Naive thymus-derived CD4-positive, alpha-beta T cell (primary cell): ENCODE measurements at regions of chr2 and their contacts with region 1.

Region 1: DNA sequence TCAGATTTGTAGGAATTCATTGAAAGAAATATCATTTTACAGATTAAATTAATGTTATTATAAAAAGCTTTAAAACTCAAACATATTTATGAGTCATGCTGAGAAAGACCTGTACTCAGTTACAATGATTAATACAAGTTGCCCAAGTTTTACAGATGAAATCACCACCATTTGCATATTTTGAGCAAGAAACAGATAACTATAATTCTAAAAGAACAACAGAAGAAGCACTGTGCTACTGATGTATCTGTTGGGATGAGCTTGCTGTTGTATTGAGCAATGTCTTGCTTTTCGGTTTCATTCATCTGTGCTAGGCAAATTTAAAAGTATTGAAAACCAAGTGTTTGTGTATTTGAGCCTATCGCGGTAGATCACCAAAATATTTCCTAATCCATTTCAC is 1589.1 kb upstream of the ZEB2 start:
- DNase-seq: no peak
- ATAC-seq: no peak
- H3K4me3 ChIP-seq: no peak overlapping the region
- H3K4me3 Mint-ChIP-seq: no peak overlapping the region
- H3K27ac ChIP-seq: no peak overlapping the region
- H3K27ac Mint-ChIP-seq: no peak overlapping the region
- H3K4me1 ChIP-seq: no peaks in the 10 kb centered on the region
- H3K4me1 Mint-ChIP-seq: no peaks in the 10 kb centered on the region
- H3K27me3 ChIP-seq: no peaks in the 10 kb centered on the region
- H3K27me3 Mint-ChIP-seq: no peaks in the 10 kb centered on the region

Region 2: GRCh38 chr2:145680276-145680675 is 428.7 kb before region 1 on chr2:
- CTCF ChIA-PET with region 1: no interaction called
- POLR2A ChIA-PET with region 1: no interaction called
- intact Hi-C with region 1: no loop called
- DNase-seq: no peak
- ATAC-seq: no peak
- H3K4me3 ChIP-seq: no peak overlapping the region
- H3K4me3 Mint-ChIP-seq: no peak overlapping the region
- H3K27ac ChIP-seq: no peak overlapping the region
- H3K27ac Mint-ChIP-seq: no peak overlapping the region
- H3K4me1 ChIP-seq: no peaks in the 10 kb centered on the region
- H3K4me1 Mint-ChIP-seq: no peaks in the 10 kb centered on the region
- H3K27me3 ChIP-seq: no peaks in the 10 kb centered on the region
- H3K27me3 Mint-ChIP-seq: no peaks in the 10 kb centered on the region

Region 3: GRCh38 chr2:146080925-146081324 is 28.1 kb before region 1 on chr2:
- CTCF ChIA-PET with region 1: no interaction called
- POLR2A ChIA-PET with region 1: no interaction called
- intact Hi-C with region 1: no loop called
- DNase-seq: no peak
- ATAC-seq: no peak
- H3K4me3 ChIP-seq: no peak overlapping the region
- H3K4me3 Mint-ChIP-seq: no peak overlapping the region
- H3K27ac ChIP-seq: no peak overlapping the region
- H3K27ac Mint-ChIP-seq: no peak overlapping the region
- H3K4me1 ChIP-seq: no peaks in the 10 kb centered on the region
- H3K4me1 Mint-ChIP-seq: no peaks in the 10 kb centered on the region
- H3K27me3 ChIP-seq: no peaks in the 10 kb centered on the region
- H3K27me3 Mint-ChIP-seq: no peaks in the 10 kb centered on the region

Region 4: DNA sequence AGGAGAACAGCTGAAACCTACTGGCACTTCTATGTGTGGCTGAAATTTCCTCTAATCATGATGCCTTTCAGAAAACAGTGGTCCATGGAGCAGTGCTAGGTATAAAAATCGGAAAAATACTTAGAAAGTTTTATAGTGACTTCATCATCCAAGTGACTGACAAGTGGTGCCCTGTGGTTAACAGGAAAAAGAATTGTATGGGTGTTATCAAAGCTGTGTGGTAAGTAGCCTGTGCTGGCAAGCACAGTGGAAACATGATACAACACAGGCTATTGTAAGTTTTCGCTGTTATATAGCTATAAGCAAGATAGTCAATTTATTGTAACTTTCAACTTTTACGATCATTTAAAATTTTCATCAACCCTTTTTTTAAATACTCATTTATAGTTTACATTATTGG is 10.6 kb after region 1 on chr2:
- CTCF ChIA-PET with region 1: no interaction called
- POLR2A ChIA-PET with region 1: no interaction called
- intact Hi-C with region 1: loop called (anchors 1 kb)
- DNase-seq: no peak
- ATAC-seq: no peak
- H3K4me3 ChIP-seq: no peak overlapping the region
- H3K4me3 Mint-ChIP-seq: no peak overlapping the region
- H3K27ac ChIP-seq: no peak overlapping the region
- H3K27ac Mint-ChIP-seq: no peak overlapping the region
- H3K4me1 ChIP-seq: no peaks in the 10 kb centered on the region
- H3K4me1 Mint-ChIP-seq: no peaks in the 10 kb centered on the region
- H3K27me3 ChIP-seq: no peaks in the 10 kb centered on the region
- H3K27me3 Mint-ChIP-seq: no peaks in the 10 kb centered on the region

Region 5: GRCh38 chr2:146701183-146701582 is 592.2 kb after region 1 on chr2:
- CTCF ChIA-PET with region 1: no interaction called
- POLR2A ChIA-PET with region 1: no interaction called
- intact Hi-C with region 1: no loop called
- DNase-seq: no peak
- ATAC-seq: no peak
- H3K4me3 ChIP-seq: no peak overlapping the region
- H3K4me3 Mint-ChIP-seq: no peak overlapping the region
- H3K27ac ChIP-seq: no peak overlapping the region
- H3K27ac Mint-ChIP-seq: no peak overlapping the region
- H3K4me1 ChIP-seq: no peaks in the 10 kb centered on the region
- H3K4me1 Mint-ChIP-seq: no peaks in the 10 kb centered on the region
- H3K27me3 ChIP-seq: no peaks in the 10 kb centered on the region
- H3K27me3 Mint-ChIP-seq: no peaks in the 10 kb centered on the region